Endothelial cell of umbilical vein (primary cell): ENCODE measurements at regions of chr1 and their contacts with region 1.

Region 1: DNA sequence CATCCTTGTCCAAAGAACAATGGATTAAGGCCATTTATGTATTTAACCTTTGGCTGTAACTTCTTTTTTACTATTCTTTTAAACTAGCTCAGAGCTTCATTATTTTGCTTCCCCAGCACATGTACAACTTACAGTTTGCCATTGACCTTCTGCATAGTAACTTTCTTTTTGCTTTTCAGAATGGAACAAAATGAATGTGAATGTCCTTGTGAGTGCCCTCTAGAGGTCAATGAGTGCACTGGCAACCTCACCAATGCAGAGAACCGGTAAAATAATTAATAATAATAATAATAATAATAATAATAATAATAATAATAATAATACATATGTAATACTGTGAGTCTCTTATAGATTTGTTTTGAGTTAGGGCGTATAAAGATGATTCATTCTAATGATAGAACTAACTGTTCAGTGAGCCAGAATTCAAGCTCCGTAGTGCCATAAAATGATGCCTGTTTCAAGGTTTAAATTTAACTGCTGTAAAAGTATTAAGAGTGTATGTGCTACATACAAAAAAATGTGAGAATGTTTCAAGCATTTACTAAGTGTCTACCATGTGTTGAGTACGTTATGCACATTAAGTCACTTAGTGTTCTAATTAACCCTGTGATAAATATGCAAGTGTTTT is 69.0 kb upstream of the RAVER2 start:
- DNase-seq: peak; percentile 32
- H3K4me3 ChIP-seq: no peak overlapping the region
- H3K27ac ChIP-seq: no peak overlapping the region
- H3K4me1 ChIP-seq: no peaks in the 10 kb centered on the region
- H3K27me3 ChIP-seq: no peaks in the 10 kb centered on the region
- CTCF ChIP-seq: peak; percentile 35 to 67
- POLR2A ChIP-seq: no peak

Region 2: DNA sequence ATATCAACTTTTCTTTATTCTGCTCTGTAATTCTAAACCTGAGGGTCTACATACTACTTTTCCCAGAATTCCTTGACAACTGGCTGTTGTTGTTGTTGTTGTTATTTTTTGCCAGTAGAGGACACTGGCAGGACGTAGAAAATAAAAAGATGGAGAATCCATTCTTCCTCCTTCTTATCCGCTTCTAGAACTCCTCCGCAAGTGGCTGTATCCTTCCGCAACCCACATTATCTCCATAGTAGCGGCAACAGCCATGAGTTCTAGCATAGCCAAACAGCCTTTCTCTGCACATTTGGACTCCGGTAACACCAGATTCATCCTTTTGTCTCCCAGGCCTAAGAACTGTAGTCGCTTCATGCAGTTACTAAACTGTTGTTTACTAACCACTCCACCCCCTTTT is 297.0 kb before region 1 on chr1:
- CTCF ChIA-PET with region 1: no interaction called
- POLR2A ChIA-PET with region 1: no interaction called
- dilution Hi-C with region 1: no loop called
- intact Hi-C with region 1: loop called (anchors 5 kb)
- DNase-seq: no peak
- H3K4me3 ChIP-seq: no peak overlapping the region
- H3K27ac ChIP-seq: no peak overlapping the region
- H3K4me1 ChIP-seq: no peaks in the 10 kb centered on the region
- H3K27me3 ChIP-seq: no peaks in the 10 kb centered on the region
- CTCF ChIP-seq: no peak
- POLR2A ChIP-seq: no peak

Region 3: DNA sequence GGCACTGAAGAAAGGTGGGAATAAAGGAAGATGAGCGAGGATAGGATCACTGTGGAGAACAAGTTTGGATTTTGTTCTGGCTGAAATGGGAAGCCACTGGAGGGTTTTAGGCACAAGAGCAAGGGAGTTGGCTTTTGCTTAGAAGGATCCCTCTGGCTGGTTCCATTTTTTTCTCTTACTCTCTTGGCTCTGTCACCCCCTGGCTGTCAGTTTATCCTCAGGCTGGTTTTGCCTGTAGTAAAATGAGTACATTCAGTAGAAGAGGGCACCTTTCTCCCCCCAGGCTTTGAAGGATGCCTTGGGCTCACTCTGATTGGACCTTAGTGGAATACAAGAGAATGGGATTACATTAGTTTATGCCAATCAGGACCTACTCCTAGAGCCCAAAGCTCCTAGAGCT is 188.8 kb before region 1 on chr1:
- CTCF ChIA-PET with region 1: no interaction called
- POLR2A ChIA-PET with region 1: no interaction called
- dilution Hi-C with region 1: no loop called
- intact Hi-C with region 1: no loop called
- DNase-seq: no peak
- H3K4me3 ChIP-seq: no peak overlapping the region
- H3K27ac ChIP-seq: no peak overlapping the region
- H3K4me1 ChIP-seq: peaks cover 20% of the 10 kb centered on the region
- H3K27me3 ChIP-seq: no peaks in the 10 kb centered on the region
- CTCF ChIP-seq: no peak
- POLR2A ChIP-seq: no peak

Region 4: GRCh38 chr1:64581135-64581842 is 94.5 kb before region 1 on chr1:
- CTCF ChIA-PET with region 1: no interaction called
- POLR2A ChIA-PET with region 1: no interaction called
- dilution Hi-C with region 1: no loop called
- intact Hi-C with region 1: no loop called
- DNase-seq: no peak
- H3K4me3 ChIP-seq: no peak overlapping the region
- H3K27ac ChIP-seq: no peak overlapping the region
- H3K4me1 ChIP-seq: no peaks in the 10 kb centered on the region
- H3K27me3 ChIP-seq: no peaks in the 10 kb centered on the region
- CTCF ChIP-seq: no peak
- POLR2A ChIP-seq: no peak

Region 5: GRCh38 chr1:64663668-64664067 is 12.2 kb before region 1 on chr1:
- CTCF ChIA-PET with region 1: interaction called, 15 read pairs
- POLR2A ChIA-PET with region 1: no interaction called
- dilution Hi-C with region 1: no loop called
- intact Hi-C with region 1: no loop called
- DNase-seq: no peak
- H3K4me3 ChIP-seq: no peak overlapping the region
- H3K27ac ChIP-seq: no peak overlapping the region
- H3K4me1 ChIP-seq: no peaks in the 10 kb centered on the region
- H3K27me3 ChIP-seq: no peaks in the 10 kb centered on the region
- CTCF ChIP-seq: peak in 1 of 2 donors; percentile 18
- POLR2A ChIP-seq: no peak